CD4-positive, alpha-beta memory T cell (primary cell): ENCODE measurements at regions of chr11 and their contacts with region 1.

Region 1: DNA sequence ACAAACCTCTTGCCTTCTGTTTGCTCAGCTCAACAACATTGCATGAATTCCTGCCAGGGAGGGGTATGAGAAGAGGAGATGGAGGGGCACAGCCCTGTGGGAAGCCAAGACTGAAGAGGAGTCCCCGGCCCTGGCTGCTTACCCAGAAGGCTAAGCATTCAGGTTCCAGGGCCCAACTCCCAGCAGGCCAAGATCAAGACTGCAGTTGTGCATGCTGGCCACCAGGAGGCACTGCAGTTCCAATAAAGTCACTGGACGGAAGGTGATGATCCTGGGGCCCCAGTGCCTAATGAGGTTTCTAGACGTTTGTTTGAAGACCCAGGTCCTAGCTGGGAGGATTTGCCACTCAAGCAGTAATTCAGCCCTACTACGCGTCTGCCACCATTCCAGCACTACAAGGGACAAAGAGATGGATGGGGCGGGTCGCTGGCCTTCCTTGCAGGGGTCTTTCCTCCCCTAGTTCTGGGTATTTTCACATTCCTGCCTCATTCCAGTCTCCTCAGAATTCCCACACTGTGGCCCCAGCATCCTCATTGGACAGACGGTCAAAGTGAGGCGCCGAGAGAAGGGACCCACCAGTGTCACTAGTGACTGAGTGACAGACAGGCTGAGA is 23.6 kb downstream of the ALX4 start:
- DNase-seq: peak in 4 of 5 donors; percentile 41 to 49 (median 46)
- H3K4me3 ChIP-seq: no peak overlapping the region
- H3K4me3 Mint-ChIP-seq: no peak overlapping the region
- H3K27ac ChIP-seq: no peak overlapping the region
- H3K27ac Mint-ChIP-seq: peak overlapping the region in 1 of 7 donors; percentile 56
- H3K4me1 ChIP-seq: no peaks in the 10 kb centered on the region
- H3K4me1 Mint-ChIP-seq: peaks cover 0 to 2% (median 0%) of the 10 kb centered on the region in 4 donors
- H3K27me3 ChIP-seq: no peaks in the 10 kb centered on the region
- H3K27me3 Mint-ChIP-seq: peaks cover 6 to 7% of the 10 kb centered on the region in 2 donors

Region 2: GRCh38 chr11:44235765-44236201 is 50.6 kb before region 1 on chr11:
- CTCF ChIA-PET with region 1: no interaction called
- POLR2A ChIA-PET with region 1: no interaction called
- intact Hi-C with region 1: no loop called
- DNase-seq: no peak
- H3K4me3 ChIP-seq: no peak overlapping the region
- H3K4me3 Mint-ChIP-seq: no peak overlapping the region
- H3K27ac ChIP-seq: no peak overlapping the region
- H3K27ac Mint-ChIP-seq: peak overlapping the region in 1 of 7 donors; percentile 31
- H3K4me1 ChIP-seq: no peaks in the 10 kb centered on the region
- H3K4me1 Mint-ChIP-seq: no peaks in the 10 kb centered on the region
- H3K27me3 ChIP-seq: no peaks in the 10 kb centered on the region
- H3K27me3 Mint-ChIP-seq: no peaks in the 10 kb centered on the region

Region 3: DNA sequence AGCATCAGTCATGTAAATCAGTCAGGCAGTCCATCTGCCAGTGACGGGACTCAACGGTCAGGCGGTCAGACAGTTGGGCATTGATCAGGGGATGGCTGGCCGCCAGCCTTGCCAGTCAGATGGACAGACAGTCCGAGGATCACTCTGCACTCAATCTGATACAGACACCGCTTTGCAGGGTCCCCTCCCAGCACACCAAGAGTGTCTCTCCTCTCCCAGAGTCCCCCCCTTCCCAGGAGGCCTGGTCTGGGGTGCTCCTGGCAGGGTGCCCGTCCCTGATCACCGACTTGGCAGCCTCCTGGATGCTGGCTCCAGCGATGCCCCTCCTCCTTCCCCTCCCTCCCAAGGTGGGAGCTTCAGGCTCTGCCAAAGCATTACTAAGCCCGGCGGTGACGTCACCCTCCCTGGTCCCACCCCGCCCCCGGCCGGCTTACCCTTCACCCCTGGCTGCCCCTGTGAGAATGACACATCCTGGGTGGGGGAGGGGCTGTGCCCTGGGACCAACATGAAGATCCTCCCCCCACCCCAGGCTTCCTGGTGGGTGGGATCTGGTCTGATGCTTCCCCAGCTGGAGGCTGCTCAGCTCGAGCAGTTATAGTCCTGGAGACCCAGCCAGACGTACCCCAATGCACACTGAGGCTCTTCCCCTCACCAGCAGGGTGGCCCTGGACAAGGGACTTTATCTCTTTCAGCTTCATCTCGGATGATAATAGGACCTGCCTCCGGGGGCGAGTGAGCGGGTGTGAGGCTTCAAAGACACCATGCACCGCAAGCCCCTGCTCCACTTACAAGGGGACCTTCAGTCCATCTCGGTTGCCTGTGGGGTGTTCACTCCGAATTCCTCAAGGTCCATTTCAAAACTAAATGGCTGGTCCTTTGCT is 348.3 kb after region 1 on chr11:
- CTCF ChIA-PET with region 1: no interaction called
- POLR2A ChIA-PET with region 1: no interaction called
- intact Hi-C with region 1: loop called (anchors 10 kb)
- DNase-seq: no peak
- H3K4me3 ChIP-seq: no peak overlapping the region
- H3K4me3 Mint-ChIP-seq: no peak overlapping the region
- H3K27ac ChIP-seq: no peak overlapping the region
- H3K27ac Mint-ChIP-seq: no peak overlapping the region
- H3K4me1 ChIP-seq: peaks cover 3% of the 10 kb centered on the region
- H3K4me1 Mint-ChIP-seq: peaks cover 0 to 13% (median 7%) of the 10 kb centered on the region in 4 donors
- H3K27me3 ChIP-seq: no peaks in the 10 kb centered on the region
- H3K27me3 Mint-ChIP-seq: peaks cover 8 to 14% of the 10 kb centered on the region in 2 donors